GM10248 (cell line): ENCODE measurements at regions of chr10 and their contacts with region 1.

Region 1: DNA sequence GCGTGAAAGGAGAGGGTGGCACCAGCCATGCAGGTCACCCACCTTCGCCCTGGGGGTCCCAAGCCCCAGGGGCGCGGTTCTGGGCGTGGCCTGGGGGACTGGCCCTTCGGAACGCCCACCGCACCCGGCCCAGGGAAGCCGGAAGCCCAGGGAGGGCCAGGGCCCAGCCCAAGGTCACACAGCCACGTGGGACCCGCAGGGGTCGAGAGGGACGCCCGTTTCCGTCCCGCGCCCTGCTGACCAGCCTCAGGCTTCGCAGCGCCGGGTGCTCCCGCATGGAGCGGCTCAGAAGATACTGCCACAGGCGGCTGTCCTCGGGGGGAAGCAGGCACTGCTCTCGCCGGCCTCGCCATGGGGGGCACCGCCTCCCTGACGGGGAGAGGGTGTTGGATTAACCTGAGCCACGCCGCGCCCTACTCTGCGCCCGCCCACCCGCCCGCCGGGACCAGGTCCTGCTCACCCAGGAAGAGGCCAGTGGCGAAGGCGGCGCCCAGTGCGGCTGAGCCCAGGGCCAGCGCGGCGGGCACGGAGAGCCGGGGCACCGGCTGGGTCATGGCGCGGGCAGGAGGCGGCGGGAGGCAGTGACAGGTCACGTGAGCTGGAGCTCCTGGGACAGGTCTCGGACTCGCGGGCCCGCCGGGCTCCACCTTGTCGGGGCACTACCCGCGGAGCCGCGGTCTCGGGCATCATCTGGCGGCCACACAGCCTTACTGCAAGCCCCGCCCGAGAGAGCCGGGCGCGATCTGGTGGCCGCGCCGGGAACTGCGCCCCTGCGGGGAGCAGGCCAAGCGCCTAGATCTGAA is at the start of gene COMTD1:
- DNase-seq: peak; percentile 95
- CTCF ChIP-seq: peak; percentile 100

Region 2: DNA sequence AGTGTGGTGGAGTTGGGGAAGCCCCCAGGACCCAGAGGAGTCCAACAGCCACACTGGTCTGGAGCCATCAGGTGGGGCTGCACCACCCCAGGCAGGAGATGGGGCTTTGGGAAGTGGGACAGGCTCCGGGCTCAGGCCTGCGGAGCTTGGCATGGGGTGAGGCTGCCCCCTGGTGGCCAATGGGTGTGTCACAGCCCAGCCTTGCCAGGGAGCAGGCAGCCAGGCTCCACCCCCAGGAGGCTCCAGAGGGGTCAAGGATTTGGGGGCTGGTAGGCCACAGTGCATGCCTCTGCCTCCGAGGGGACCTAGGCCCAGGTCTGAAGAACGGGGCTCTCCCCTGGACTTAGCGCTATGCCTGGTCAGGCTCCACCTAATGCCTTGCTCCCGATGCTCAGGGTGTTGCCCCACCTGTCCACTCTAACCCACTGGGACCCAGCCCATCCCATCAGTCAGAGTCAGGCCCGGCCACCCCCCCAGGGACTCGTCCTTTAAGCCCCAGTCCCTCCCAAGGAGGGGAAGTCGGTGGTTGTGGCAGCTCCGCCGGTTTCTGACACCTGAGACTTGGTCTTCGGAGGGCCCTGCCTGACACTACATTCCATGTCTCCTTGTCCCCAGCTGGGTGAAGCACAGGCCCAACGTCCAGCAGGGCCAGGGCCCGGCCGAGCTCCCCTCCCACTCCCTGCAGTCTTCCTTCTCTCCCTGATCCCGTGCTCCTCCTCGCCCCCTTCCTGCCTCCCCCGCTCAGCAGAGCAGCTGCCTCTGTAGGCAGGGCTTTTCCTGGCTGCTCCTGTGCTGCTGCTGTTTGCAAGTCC is 135.4 kb before region 1 on chr10:
- CTCF ChIA-PET with region 1: interaction called, 10 read pairs
- POLR2A ChIA-PET with region 1: no interaction called
- DNase-seq: peak; percentile 90
- CTCF ChIP-seq: peak; percentile 99

Region 3: DNA sequence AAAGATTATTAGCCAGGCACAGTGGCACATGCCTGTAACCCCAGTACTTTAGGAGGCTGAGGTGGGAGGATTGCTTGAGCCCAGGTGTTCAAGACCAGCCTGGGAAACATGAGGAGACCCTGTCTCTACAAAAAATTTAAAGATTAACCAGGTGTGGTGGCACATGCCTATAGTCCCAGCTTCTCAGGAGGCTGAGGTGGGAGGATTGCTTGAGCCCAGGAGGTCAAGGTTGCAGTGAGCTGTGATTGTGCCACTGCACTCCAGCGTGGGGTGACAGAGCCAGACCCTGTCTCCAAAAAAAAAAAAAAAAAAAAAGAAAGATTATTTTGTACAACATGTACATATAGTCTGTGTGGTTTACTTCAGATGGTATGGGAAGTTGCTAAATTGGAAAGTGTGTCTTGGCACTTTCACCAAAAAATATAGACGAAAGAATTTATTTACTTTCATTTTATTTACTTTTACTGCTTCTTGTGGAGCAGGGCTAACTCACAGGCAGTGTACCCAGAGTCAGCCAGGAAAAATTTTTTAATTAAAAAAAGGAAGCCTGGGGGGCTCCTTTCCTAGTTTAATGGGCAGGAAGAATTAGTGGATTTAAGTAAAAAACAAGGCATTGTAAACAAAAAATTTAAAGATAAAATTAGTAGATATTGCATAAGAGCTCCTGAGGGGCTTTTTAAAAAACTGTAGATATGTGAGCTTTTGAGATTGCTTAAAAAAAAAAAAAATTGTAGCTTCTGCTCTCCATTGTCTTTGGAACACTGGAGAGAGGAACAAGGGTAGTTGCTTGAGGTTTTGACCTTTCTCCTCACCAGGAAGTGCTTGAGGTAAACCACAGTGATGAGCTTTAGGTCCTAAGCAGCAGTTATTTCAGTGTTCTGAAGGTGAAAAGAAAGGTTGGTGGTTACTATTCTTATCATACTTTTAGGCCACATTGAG is 69.6 kb before region 1 on chr10:
- CTCF ChIA-PET with region 1: interaction called, 14 read pairs
- POLR2A ChIA-PET with region 1: no interaction called
- DNase-seq: peak; percentile 75
- CTCF ChIP-seq: no peak

Region 4: DNA sequence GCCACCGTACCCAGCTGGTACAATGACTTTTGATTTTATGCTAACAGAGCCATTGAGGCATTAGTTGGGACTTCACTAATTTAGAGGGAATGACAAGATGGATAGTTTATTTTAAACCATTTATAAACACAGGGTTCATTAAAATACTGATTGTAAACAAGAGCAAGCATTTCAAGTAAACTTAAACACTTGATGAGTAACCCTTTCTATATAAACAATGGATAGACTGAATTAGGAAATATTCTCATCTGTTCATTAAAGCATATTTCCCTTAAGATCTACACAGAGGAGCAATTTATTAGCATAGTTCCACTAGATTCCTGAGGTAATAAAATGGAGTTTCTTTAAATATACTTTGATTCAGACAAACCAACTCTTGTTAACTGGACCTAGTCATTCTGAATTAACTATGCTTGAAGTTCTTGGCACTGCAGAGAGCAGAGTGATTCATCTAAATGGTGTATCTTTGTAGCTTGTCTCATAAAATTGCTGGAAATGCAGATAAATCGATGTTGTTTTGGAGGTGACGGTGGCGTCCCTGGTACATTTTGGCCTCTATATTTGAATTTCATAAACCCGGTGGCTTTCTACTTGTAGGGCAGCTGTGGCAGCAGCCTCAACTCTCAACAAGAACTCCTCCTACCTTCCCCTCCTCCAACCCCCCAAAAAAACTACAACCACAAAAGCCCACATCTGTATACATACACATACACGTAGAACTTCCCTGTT is 40.4 kb before region 1 on chr10:
- CTCF ChIA-PET with region 1: interaction called, 148 read pairs
- POLR2A ChIA-PET with region 1: no interaction called
- DNase-seq: no peak
- CTCF ChIP-seq: no peak

Region 5: GRCh38 chr10:75245491-75246250 is 10.1 kb after region 1 on chr10:
- CTCF ChIA-PET with region 1: interaction called, 26 read pairs
- POLR2A ChIA-PET with region 1: no interaction called
- DNase-seq: no peak
- CTCF ChIP-seq: no peak